ENCODE measurements at regions of chr5 and their contacts with region 1.

Region 1: DNA sequence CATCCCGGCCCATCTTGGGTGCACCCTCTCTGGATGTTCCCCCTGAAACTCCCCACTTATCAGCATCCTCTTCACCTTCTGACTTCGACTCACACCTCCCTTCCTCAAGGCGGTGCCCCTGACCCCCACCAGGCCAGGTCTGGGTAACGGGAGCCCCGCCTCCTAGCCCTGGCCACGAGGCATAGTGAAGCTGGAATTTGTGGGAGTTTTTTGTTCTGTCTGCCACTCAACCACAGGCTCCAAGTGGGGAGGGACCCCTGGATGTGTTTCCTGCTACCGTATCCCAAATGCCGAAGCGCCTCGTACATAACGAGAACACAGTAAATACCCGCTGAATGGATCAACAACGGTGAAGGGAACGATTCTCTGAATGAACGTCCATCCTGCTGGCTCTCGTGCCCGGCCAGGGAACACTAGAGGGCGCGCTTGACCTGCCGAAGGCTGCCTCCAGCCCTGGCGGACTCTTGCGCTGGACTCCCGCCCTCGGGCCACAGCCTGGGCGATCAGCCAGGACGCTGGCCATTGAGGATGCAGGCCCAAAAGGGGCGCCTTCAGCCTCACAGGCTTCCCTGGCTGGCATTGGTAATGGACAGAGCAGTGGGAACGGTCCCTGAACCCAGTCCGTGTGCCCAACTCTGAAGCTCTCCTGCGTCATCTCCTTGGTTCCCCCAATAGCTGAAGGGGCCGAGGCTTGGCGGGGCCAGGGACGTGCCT is 47.3 kb upstream of the PHYKPL start:
- DNase-seq: peak in 7 of 9 donors; percentile 28 to 71 (median 40)
- ATAC-seq: peak; percentile 68
- H3K4me3 ChIP-seq: no peak overlapping the region
- H3K4me3 Mint-ChIP-seq: no peak overlapping the region
- H3K27ac ChIP-seq: no peak overlapping the region
- H3K27ac Mint-ChIP-seq: no peak overlapping the region
- H3K4me1 ChIP-seq: peaks cover 0 to 4% of the 10 kb centered on the region in 2 donors
- H3K4me1 Mint-ChIP-seq: peaks cover 0 to 6% (median 4%) of the 10 kb centered on the region in 7 donors
- H3K27me3 ChIP-seq: no peaks in the 10 kb centered on the region
- H3K27me3 Mint-ChIP-seq: peaks cover 2 to 9% (median 7%) of the 10 kb centered on the region in 5 donors

Region 2: DNA sequence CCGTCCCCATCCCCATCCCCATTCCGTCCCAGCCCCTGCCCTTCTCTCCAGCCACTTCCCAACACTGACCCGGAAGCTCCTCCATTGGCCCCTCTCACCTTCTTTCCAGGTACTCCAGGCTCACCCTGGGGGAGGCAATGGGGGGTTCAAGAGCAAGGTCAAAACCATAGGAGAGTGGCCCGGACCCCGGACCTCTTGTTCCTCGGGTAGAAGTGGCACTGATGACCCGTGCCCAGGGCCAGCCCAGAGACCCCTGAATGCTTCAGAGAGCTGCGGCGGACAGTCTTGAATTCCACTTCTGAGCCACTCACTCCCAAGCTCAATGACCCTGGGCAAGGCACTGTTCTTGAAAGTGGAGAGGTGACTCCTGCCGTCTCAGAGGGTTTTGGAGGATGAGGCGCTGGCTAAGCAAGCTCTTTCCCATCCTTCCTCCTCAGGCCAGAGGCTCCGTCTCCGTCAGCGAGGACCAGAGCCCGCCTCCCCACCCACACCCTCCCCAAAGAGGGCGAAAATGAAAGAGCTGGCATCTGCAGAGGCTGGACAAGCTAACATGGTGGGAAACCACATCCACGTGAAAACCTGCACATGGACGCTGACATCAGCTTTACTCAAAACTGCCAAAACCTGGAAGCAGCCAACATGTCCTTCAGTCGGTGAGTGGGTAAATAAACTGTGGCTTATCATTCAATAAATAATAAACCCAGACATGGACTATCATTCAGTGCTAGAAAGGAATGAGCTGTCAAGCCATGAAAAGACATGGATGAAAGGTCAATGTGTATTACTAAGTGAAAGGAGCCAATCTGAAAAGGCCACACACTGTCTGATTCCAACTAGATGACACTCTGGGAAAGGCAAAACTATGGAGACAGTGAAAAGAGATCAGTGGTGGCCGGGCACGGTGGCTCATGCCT is 20.0 kb before region 1 on chr5:
- CTCF ChIA-PET with region 1: no interaction called
- POLR2A ChIA-PET with region 1: no interaction called
- intact Hi-C with region 1: no loop called
- DNase-seq: no peak
- ATAC-seq: no peak
- H3K4me3 ChIP-seq: no peak overlapping the region
- H3K4me3 Mint-ChIP-seq: no peak overlapping the region
- H3K27ac ChIP-seq: no peak overlapping the region
- H3K27ac Mint-ChIP-seq: peak overlapping the region in 1 of 9 donors; percentile 67
- H3K4me1 ChIP-seq: no peaks in the 10 kb centered on the region
- H3K4me1 Mint-ChIP-seq: no peaks in the 10 kb centered on the region
- H3K27me3 ChIP-seq: no peaks in the 10 kb centered on the region
- H3K27me3 Mint-ChIP-seq: no peaks in the 10 kb centered on the region

Region 3: GRCh38 chr5:178312880-178313282 is 33.0 kb after region 1 on chr5:
- CTCF ChIA-PET with region 1: no interaction called
- POLR2A ChIA-PET with region 1: no interaction called
- intact Hi-C with region 1: no loop called
- DNase-seq: no peak
- ATAC-seq: peak; percentile 79
- H3K4me3 ChIP-seq: no peak overlapping the region
- H3K4me3 Mint-ChIP-seq: no peak overlapping the region
- H3K27ac ChIP-seq: no peak overlapping the region
- H3K27ac Mint-ChIP-seq: no peak overlapping the region
- H3K4me1 ChIP-seq: no peaks in the 10 kb centered on the region
- H3K4me1 Mint-ChIP-seq: no peaks in the 10 kb centered on the region
- H3K27me3 ChIP-seq: no peaks in the 10 kb centered on the region
- H3K27me3 Mint-ChIP-seq: peaks cover 0 to 6% (median 0%) of the 10 kb centered on the region in 5 donors

Region 4: GRCh38 chr5:178551059-178551458 is 271.2 kb after region 1 on chr5:
- CTCF ChIA-PET with region 1: interaction called, 7 read pairs
- POLR2A ChIA-PET with region 1: no interaction called
- intact Hi-C with region 1: loop called in 1 of 2 experiments (anchors 10 kb)
- DNase-seq: peak in 4 of 9 donors; percentile 5 to 21 (median 12)
- ATAC-seq: no peak
- H3K4me3 ChIP-seq: no peak overlapping the region
- H3K4me3 Mint-ChIP-seq: no peak overlapping the region
- H3K27ac ChIP-seq: no peak overlapping the region
- H3K27ac Mint-ChIP-seq: no peak overlapping the region
- H3K4me1 ChIP-seq: no peaks in the 10 kb centered on the region
- H3K4me1 Mint-ChIP-seq: no peaks in the 10 kb centered on the region
- H3K27me3 ChIP-seq: no peaks in the 10 kb centered on the region
- H3K27me3 Mint-ChIP-seq: peaks cover 0 to 29% (median 13%) of the 10 kb centered on the region in 5 donors

Region 5: DNA sequence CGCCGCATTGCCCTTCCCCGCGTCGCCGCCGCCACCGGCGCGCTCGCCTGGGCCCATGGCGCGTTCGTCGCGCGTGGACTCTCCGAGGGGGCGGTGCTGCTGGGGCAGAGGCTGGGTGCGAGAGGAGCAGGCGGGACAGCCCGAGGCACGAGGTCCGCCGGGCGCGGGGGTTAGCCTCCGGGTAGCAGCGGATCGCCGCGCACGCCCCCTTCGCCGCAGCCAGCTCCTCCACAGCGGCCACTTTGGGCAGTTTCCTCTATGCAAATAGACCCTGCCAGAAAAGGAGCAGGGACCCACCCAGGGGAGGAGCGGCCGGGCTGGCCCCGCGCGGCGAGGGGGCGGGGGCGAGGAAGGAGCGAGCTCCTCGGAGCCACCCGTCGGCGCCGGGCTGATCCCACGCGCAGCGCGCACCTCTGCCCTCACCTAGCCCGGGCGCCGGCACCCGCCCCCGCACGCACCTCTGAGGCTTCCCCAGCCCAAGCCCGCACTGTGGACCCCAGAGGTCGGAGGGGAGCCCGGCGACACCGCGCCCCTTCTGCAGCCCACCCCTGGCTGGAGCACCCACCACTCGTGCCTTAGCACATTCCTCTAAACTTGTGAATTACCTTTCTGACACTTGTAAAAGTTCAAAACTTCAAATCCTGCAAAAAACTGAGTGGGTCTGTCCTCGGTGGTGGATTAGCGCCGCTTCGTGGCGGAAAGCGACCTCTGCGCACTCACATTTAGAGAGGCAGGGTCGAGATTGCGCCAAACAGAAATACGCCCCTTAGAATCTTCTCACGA is 310.4 kb after region 1 on chr5 and contains the start of gene COL23A1:
- CTCF ChIA-PET with region 1: no interaction called
- POLR2A ChIA-PET with region 1: no interaction called
- intact Hi-C with region 1: loop called in 1 of 2 experiments (anchors 1 kb)
- DNase-seq: peak; percentile 21 to 48 (median 36)
- ATAC-seq: peak; percentile 72
- H3K4me3 ChIP-seq: peak within 1 kb of the TSS; percentile 0
- H3K4me3 Mint-ChIP-seq: peak within 1 kb of the TSS; percentile 73 to 91 (median 84)
- H3K27ac ChIP-seq: no peak within 1 kb of the TSS
- H3K27ac Mint-ChIP-seq: no peak within 1 kb of the TSS
- H3K4me1 ChIP-seq: no peaks in the 10 kb centered on the region
- H3K4me1 Mint-ChIP-seq: peaks cover 0 to 13% (median 7%) of the 10 kb centered on the region in 7 donors
- H3K27me3 ChIP-seq: peaks cover 0 to 5% of the 10 kb centered on the region in 2 donors
- H3K27me3 Mint-ChIP-seq: peaks cover 48 to 58% (median 53%) of the 10 kb centered on the region in 5 donors
- total RNA-seq, gene COL23A1: 0.13 to 0.32 (median 0.22) TPM in 3 of 5 experiments, not detected in the others

Region 6: GRCh38 chr5:178838695-178839685 is 559.1 kb after region 1 on chr5:
- CTCF ChIA-PET with region 1: no interaction called
- POLR2A ChIA-PET with region 1: no interaction called
- intact Hi-C with region 1: loop called in 1 of 2 experiments (anchors 5 kb)
- DNase-seq: peak in 7 of 9 donors; percentile 15 to 44 (median 21)
- ATAC-seq: peak; percentile 84
- H3K4me3 ChIP-seq: no peak overlapping the region
- H3K4me3 Mint-ChIP-seq: no peak overlapping the region
- H3K27ac ChIP-seq: no peak overlapping the region
- H3K27ac Mint-ChIP-seq: no peak overlapping the region
- H3K4me1 ChIP-seq: no peaks in the 10 kb centered on the region
- H3K4me1 Mint-ChIP-seq: no peaks in the 10 kb centered on the region
- H3K27me3 ChIP-seq: no peaks in the 10 kb centered on the region
- H3K27me3 Mint-ChIP-seq: peaks cover 0 to 3% (median 0%) of the 10 kb centered on the region in 5 donors

Region 7: GRCh38 chr5:179495906-179496455 is 1216.1 kb after region 1 on chr5:
- CTCF ChIA-PET with region 1: interaction called, 3 read pairs
- POLR2A ChIA-PET with region 1: no interaction called
- intact Hi-C with region 1: loop called in 1 of 2 experiments (anchors 5 kb)
- DNase-seq: no peak
- ATAC-seq: no peak
- H3K4me3 ChIP-seq: no peak overlapping the region
- H3K4me3 Mint-ChIP-seq: no peak overlapping the region
- H3K27ac ChIP-seq: no peak overlapping the region
- H3K27ac Mint-ChIP-seq: no peak overlapping the region
- H3K4me1 ChIP-seq: no peaks in the 10 kb centered on the region
- H3K4me1 Mint-ChIP-seq: peaks cover 0 to 1% (median 0%) of the 10 kb centered on the region in 7 donors
- H3K27me3 ChIP-seq: no peaks in the 10 kb centered on the region
- H3K27me3 Mint-ChIP-seq: peaks cover 0 to 5% (median 0%) of the 10 kb centered on the region in 5 donors